OCI-LY7 (cell line): ENCODE measurements at regions of chr13 and their contacts with region 1.

Region 1: GRCh38 chr13:89066868-89067466 is 1395.8 kb downstream of the SLITRK5 start:
- DNase-seq: peak; percentile 72
- H3K4me3 ChIP-seq: no peak overlapping the region
- H3K27ac ChIP-seq: no peak overlapping the region
- H3K4me1 ChIP-seq: no peaks in the 10 kb centered on the region
- CTCF ChIP-seq: peak; percentile 100

Region 2: GRCh38 chr13:87677496-87678371 is 1389.2 kb before region 1 on chr13:
- CTCF ChIA-PET with region 1: no interaction called
- POLR2A ChIA-PET with region 1: no interaction called
- intact Hi-C with region 1: loop called (anchors 5 kb)
- DNase-seq: peak; percentile 94
- H3K4me3 ChIP-seq: peak overlapping the region; percentile 69
- H3K27ac ChIP-seq: peak overlapping the region; percentile 88
- H3K4me1 ChIP-seq: peaks cover 75% of the 10 kb centered on the region
- CTCF ChIP-seq: no peak

Region 3: DNA sequence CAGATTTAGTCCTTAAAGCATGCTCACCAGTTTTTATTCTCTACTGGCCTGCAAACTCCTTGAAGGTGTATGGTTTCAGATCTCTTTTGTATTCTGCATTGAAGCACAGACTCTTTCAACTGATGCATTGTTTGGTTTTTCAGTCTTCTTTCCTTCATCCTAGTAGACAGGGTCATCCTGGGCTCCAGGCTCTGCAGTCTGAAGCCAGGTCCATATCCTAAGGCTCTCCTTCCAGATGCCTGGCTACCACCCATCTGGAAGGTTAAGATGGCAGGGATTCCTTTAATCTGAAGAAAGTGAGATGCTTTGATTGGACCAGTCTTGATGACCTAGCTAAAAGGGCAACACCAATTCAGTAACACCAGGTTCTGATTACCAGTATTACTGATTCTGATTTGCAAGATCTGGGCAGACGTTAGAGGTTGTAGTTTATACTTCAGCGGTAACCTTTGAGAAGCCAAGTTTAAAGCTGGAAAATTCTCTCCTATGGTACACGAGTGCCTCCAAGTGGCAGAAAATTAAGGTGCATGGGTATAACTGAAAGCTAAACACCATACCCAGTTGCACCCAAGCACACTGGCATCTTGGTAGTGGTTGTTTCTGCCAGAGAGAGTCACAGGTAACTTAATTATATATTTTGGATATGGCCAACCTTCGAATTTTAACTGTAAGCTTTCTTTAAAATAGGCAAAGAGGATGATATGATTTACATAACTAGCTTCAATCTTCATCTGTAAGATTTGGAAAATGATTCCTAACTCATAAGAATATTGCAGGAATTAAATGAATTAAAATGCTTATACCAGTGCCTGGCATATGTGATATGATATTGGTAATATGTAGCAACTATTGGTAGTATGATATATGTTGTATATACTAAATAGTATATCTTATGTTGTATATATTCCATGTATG is 628.6 kb after region 1 on chr13:
- CTCF ChIA-PET with region 1: no interaction called
- POLR2A ChIA-PET with region 1: no interaction called
- intact Hi-C with region 1: loop called (anchors 5 kb)
- DNase-seq: peak; percentile 39
- H3K4me3 ChIP-seq: no peak overlapping the region
- H3K27ac ChIP-seq: no peak overlapping the region
- H3K4me1 ChIP-seq: no peaks in the 10 kb centered on the region
- CTCF ChIP-seq: peak; percentile 96

Region 4: DNA sequence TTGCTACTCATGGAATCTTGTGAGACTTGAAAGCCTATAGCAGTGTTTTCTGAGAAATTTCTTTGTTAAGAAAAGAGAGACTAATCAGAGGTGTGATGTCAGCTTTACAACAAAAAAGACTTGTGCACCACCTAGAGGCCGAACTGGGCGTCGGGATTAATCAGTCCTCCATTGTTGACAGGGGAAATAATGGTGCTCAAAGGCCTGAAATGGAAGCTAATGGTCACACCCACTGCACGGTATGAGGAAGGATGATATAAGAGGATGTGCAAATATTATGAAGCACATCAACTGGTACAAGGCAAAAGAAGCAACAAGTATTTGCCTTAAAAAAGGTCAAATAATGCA is 1800.3 kb after region 1 on chr13:
- CTCF ChIA-PET with region 1: no interaction called
- POLR2A ChIA-PET with region 1: no interaction called
- intact Hi-C with region 1: loop called (anchors 5 kb)
- DNase-seq: peak; percentile 82
- H3K4me3 ChIP-seq: no peak overlapping the region
- H3K27ac ChIP-seq: no peak overlapping the region
- H3K4me1 ChIP-seq: peaks cover 3% of the 10 kb centered on the region
- CTCF ChIP-seq: peak; percentile 100